OCI-LY7 (cell line): ENCODE measurements at regions of chr22 and their contacts with region 1.

Region 1: DNA sequence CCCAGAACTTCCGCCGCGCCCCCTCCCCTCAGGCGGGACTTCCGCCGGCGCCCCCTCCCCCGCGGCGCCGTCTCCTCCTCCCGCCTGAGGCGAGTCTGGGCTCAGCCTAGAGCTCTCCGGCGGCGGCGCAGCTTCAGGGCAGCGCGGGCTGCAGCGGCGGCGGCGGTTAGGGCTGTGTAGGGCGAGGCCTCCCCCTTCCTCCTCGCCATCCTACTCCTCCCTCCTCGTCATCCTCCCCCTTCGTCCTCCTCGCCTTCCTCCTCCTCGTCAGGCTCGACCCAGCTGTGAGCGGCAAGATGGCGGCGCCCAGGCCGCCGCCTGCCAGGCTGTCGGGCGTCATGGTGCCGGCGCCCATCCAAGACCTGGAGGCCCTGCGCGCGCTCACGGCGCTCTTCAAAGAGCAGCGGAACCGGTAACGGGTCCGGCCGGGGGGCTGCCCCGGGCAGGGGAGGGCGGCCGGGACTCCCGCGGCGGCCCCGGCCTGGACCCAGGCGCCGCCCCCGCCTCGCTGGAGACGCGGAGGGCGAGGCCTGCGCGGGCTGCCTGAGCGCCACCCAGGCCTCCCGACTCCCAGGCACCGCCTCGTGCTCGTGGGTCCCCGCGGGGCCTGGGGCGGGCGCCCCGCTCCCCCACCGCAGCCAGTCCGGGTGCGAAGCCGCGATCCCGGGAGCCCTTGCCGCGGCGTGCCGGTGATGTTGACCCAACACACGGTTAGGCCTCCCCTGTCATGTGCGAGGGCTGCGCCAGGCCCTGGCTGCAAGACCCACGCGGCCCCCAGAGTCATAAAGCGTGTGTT is at the start of gene ATXN10:
- DNase-seq: peak; percentile 82
- H3K4me3 ChIP-seq: peak within 1 kb of the TSS; percentile 81
- H3K27ac ChIP-seq: peak within 1 kb of the TSS; percentile 60
- H3K4me1 ChIP-seq: peaks cover 21% of the 10 kb centered on the region
- CTCF ChIP-seq: no peak
- total RNA-seq, gene ATXN10: 54.0 and 66.1 TPM in 2 replicates

Region 2: GRCh38 chr22:45645526-45646414 is 26.2 kb before region 1 on chr22:
- CTCF ChIA-PET with region 1: no interaction called
- POLR2A ChIA-PET with region 1: no interaction called
- intact Hi-C with region 1: no loop called
- DNase-seq: peak; percentile 57
- H3K4me3 ChIP-seq: no peak overlapping the region
- H3K27ac ChIP-seq: no peak overlapping the region
- H3K4me1 ChIP-seq: no peaks in the 10 kb centered on the region
- CTCF ChIP-seq: peak; percentile 83

Region 3: DNA sequence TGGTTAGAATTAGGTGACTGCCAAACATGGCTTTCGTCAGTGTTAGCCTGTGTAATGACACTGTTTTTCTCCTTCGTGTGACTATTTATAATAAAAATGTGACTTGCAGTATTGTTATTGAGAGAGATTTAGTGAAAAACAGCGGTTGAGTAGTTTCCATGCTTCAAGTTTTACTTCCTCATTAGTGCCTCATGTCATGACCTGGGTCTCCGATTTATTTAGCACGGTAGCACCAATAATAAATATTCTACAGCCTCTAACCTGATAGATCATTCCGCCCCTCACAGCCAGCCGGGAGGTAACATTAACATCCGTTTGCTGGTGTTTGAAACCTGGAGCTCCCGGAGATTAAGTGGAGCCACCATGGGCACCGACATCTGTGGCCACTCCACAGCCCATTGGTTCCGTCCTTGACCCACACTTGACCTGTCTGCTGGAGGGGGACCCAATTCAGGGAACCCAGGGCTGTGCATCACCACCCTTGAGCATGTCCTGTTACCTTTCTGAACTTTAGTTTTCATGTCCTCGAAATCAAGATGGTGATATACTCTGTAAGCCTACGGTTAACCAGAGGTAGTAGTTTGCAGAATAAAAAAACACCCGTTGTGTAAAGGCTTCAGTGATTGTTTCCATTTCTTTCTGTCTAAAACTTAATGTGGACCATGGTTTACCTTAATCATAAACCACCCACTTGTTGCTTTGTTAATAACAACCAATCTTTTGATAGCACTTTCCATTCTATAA is 103.8 kb after region 1 on chr22:
- CTCF ChIA-PET with region 1: no interaction called
- POLR2A ChIA-PET with region 1: interaction called, 3 read pairs
- intact Hi-C with region 1: loop called (anchors 5 kb)
- DNase-seq: peak; percentile 86
- H3K4me3 ChIP-seq: peak overlapping the region; percentile 40
- H3K27ac ChIP-seq: peak overlapping the region; percentile 92
- H3K4me1 ChIP-seq: peaks cover 72% of the 10 kb centered on the region
- CTCF ChIP-seq: no peak

Region 4: GRCh38 chr22:46013460-46014416 is 341.8 kb after region 1 on chr22:
- CTCF ChIA-PET with region 1: no interaction called
- POLR2A ChIA-PET with region 1: no interaction called
- intact Hi-C with region 1: no loop called
- DNase-seq: peak; percentile 85
- H3K4me3 ChIP-seq: peak overlapping the region; percentile 68
- H3K27ac ChIP-seq: no peak overlapping the region
- H3K4me1 ChIP-seq: peaks cover 14% of the 10 kb centered on the region
- CTCF ChIP-seq: peak; percentile 84